ENCODE measurements at regions of chr7 and their contacts with region 1.

Region 1: GRCh38 chr7:65307651-65308299 is 65.9 kb upstream of the ZNF92 start:
- DNase-seq: no peak
- H3K4me3 ChIP-seq: no peak overlapping the region
- H3K27ac ChIP-seq: no peak overlapping the region
- H3K4me1 ChIP-seq: no peaks in the 10 kb centered on the region
- H3K27me3 ChIP-seq: peaks cover 41% of the 10 kb centered on the region
- CTCF ChIP-seq: peak; percentile 87

Region 2: DNA sequence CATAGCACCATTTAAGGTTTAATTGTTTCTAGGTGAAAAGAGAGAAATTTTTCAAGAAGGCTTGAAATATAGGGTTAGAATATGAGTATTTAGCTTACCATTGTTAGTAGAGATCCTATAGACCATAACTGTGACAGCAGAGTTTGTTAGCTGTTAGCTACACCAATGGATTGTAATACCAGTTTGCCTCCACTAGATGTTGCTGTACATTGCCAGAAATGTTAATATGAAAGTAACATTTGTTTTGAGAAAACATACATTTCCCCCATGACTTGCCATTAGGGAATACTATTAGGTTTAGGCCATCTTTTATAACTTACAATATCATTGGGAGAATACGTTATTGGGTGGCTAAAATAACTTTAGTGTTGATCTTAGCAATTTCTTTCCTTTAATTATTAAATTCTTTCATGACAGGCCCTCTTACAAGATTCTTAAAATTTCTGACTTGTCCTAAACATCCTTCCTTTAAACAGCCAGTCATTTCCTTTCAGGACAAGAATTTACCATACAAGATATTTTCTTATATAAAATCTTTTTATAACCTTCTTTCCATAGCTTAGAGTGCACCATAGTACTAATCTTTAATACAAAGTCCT is 356.4 kb before region 1 on chr7:
- intact Hi-C with region 1: loop called (anchors 10 kb)
- DNase-seq: no peak
- H3K4me3 ChIP-seq: no peak overlapping the region
- H3K27ac ChIP-seq: no peak overlapping the region
- H3K4me1 ChIP-seq: peaks cover 13% of the 10 kb centered on the region
- H3K27me3 ChIP-seq: peaks cover 37% of the 10 kb centered on the region
- CTCF ChIP-seq: peak; percentile 89

Region 3: GRCh38 chr7:65269150-65269856 is 38.5 kb before region 1 on chr7:
- intact Hi-C with region 1: no loop called
- DNase-seq: no peak
- H3K4me3 ChIP-seq: peak overlapping the region; percentile 54
- H3K27ac ChIP-seq: no peak overlapping the region
- H3K4me1 ChIP-seq: peaks cover 13% of the 10 kb centered on the region
- H3K27me3 ChIP-seq: peaks cover 66% of the 10 kb centered on the region
- CTCF ChIP-seq: no peak